K562 (cell line): ENCODE measurements at regions of chr19 and their contacts with region 1.

Region 1: GRCh38 chr19:3852614-3853254 is 16.1 kb downstream of the ZFR2 start:
- DNase-seq: peak in 3 of 4 experiments; percentile 39 to 79 (median 63)
- ATAC-seq: peak; percentile 81
- H3K4me3 ChIP-seq: no peak overlapping the region
- H3K27ac ChIP-seq: no peak overlapping the region
- H3K4me1 ChIP-seq: peaks cover 18 to 42% of the 10 kb centered on the region in 2 experiments; a peak in 4 of 5 replicates
- H3K27me3 ChIP-seq: peaks cover 0 to 12% of the 10 kb centered on the region in 2 experiments; a peak in 1 of 5 replicates
- CTCF ChIP-seq: peak; percentile 81 to 82 (median 82)
- EP300 ChIP-seq: no peak
- POLR2A ChIP-seq: no peak
- RAD21 ChIP-seq: peak; percentile 76 to 89

Region 2: DNA sequence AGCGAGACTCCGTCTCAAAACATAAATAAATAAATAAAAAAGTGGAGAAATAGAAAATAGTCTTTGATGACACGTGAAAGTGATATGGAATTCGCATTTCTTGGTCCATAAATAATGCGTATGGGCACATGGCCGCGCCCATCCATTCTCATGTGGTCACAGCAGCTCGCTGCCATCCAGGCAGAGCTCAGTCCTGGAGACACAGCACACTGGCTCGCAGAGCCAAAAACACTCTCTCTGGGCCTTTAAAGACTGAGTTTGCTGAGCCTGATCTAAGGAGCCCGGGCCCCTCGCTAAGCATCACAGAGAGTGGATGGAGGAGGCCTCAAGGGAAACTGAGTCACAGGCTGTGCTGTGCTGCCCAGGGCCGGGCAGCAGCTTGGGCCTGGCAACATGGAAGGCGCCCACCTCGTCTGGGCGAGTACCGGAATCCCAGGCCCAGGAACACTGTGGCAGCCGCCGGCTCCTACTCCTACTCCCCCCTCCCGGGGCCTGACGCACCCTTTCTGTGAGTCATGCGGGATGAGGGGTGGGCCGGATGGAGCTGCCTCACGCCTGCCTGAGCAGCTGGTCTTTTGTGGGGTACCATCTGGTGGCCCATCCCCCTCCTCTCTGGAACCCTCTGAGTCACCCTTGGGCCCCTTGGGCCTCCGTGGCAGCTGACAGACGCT is 197.2 kb before region 1 on chr19:
- CTCF ChIA-PET with region 1: no interaction called
- POLR2A ChIA-PET with region 1: no interaction called
- in situ Hi-C with region 1: loop called (anchors 5 kb)
- intact Hi-C with region 1: no loop called
- DNase-seq: peak in 2 of 4 experiments; percentile 31 to 34
- ATAC-seq: no peak
- H3K4me3 ChIP-seq: no peak overlapping the region
- H3K27ac ChIP-seq: no peak overlapping the region
- H3K4me1 ChIP-seq: peaks cover 0 to 53% of the 10 kb centered on the region in 2 experiments; a peak in 2 of 5 replicates
- H3K27me3 ChIP-seq: no peaks in the 10 kb centered on the region
- CTCF ChIP-seq: no peak
- EP300 ChIP-seq: no peak
- POLR2A ChIP-seq: no peak
- RAD21 ChIP-seq: no peak

Region 3: DNA sequence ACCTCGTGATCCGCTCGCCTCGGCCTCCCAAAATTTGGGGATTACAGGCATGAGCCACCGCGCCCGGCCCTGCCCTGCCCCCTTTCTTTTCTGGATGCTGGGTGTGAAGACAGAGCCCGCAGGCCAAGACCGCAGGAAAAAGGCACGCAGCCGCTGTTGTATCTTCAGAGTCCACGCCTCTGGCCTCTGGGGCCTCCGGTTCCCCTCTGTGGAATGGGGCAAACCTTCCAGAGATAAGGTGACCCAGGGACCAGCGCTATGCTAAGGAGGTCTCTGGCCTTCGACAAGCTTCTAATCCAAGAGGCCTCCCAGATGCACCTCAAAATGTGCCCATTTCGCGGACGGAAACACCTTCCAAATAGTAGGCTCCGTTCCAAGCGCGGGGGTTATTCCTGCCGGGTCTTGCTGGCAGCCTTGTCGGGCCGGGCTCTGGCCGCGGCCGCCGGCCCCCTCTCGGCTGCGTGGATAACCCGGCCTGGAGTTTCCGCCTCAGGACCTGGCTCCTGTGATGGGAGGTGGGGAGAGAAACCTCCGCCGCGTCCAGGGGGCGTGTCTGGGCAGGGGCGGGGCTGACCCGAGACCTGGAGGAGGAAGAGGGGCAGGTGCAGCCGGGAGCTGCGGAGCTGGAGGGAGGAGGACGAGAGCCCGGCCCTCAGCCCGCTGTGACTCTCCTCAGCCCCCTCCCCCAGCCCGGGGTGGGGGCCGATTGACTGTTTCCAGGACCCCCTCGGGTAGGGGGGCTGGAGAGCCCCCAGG is 131.4 kb before region 1 on chr19:
- CTCF ChIA-PET with region 1: no interaction called
- POLR2A ChIA-PET with region 1: no interaction called
- in situ Hi-C with region 1: no loop called
- intact Hi-C with region 1: loop called (anchors 5 kb)
- DNase-seq: peak; percentile 96 to 98 (median 98)
- ATAC-seq: peak; percentile 85
- H3K4me3 ChIP-seq: 0 out of 2 replicates have a peak overlapping the region, but pooled peaks have one; percentile 10
- H3K27ac ChIP-seq: no peak overlapping the region
- H3K4me1 ChIP-seq: peaks cover 7 to 31% of the 10 kb centered on the region in 2 experiments; a peak in 3 of 5 replicates
- H3K27me3 ChIP-seq: no peaks in the 10 kb centered on the region
- CTCF ChIP-seq: peak in 1 of 3 experiments; percentile 11; a peak in 1 of 6 replicates
- EP300 ChIP-seq: peak; percentile 65
- POLR2A ChIP-seq: no peak
- RAD21 ChIP-seq: no peak

Region 4: GRCh38 chr19:3783660-3784584 is 68.8 kb before region 1 on chr19:
- CTCF ChIA-PET with region 1: no interaction called
- POLR2A ChIA-PET with region 1: no interaction called
- in situ Hi-C with region 1: no loop called
- intact Hi-C with region 1: loop called (anchors 10 kb)
- DNase-seq: peak; percentile 37 to 57 (median 49)
- ATAC-seq: peak; percentile 58
- H3K4me3 ChIP-seq: no peak overlapping the region
- H3K27ac ChIP-seq: no peak overlapping the region
- H3K4me1 ChIP-seq: peaks cover 0 to 45% of the 10 kb centered on the region in 2 experiments; a peak in 2 of 5 replicates
- H3K27me3 ChIP-seq: no peaks in the 10 kb centered on the region
- CTCF ChIP-seq: peak; percentile 39 to 45 (median 44); a peak in 5 of 6 replicates
- EP300 ChIP-seq: no peak
- POLR2A ChIP-seq: no peak
- RAD21 ChIP-seq: peak in 1 of 2 experiments; percentile 32; a peak in 2 of 4 replicates

Region 5: DNA sequence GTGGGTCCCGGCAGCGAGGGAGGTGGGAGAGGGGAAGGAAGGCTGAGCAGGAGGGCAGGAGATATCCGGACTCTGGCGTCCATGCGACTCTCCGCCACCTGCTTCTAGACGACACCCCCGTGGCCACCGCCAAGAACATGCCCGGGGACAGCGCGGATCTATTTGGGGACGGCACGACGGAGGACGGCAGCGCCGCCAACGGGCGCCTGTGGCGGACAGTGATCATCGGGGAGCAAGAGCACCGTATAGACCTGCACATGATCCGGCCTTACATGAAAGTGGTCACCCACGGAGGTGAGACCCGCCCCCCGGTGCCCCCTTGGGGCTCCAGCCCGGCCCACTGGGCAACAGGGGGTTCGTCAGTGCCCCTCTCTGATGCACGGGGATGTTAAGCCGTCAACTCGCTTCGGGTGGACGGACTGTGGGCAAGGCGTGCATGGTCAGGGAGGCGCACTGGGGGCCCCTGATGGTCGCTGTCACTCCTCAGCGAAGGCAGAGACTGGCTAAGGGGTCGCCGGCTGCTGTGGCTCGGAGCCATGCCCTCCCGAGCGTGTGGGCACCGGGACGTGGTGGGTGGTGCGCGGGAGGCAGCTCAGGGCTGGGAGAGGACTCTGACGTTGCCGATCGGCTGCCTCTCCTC is 55.0 kb after region 1 on chr19:
- CTCF ChIA-PET with region 1: no interaction called
- POLR2A ChIA-PET with region 1: no interaction called
- in situ Hi-C with region 1: no loop called
- intact Hi-C with region 1: no loop called
- DNase-seq: peak in 2 of 4 experiments; percentile 31 to 32
- ATAC-seq: peak; percentile 87
- H3K4me3 ChIP-seq: no peak overlapping the region
- H3K27ac ChIP-seq: no peak overlapping the region
- H3K4me1 ChIP-seq: peaks cover 0 to 14% of the 10 kb centered on the region in 2 experiments; a peak in 2 of 5 replicates
- H3K27me3 ChIP-seq: peaks cover 19 to 35% of the 10 kb centered on the region in 2 experiments; a peak in 4 of 5 replicates
- CTCF ChIP-seq: peak; percentile 19 to 32 (median 25); a peak in 3 of 6 replicates
- EP300 ChIP-seq: no peak
- POLR2A ChIP-seq: no peak
- RAD21 ChIP-seq: peak in 1 of 2 experiments; percentile 4; a peak in 1 of 4 replicates

Region 6: GRCh38 chr19:4208385-4209094 is 355.8 kb after region 1 on chr19:
- CTCF ChIA-PET with region 1: interaction called, 6 read pairs
- POLR2A ChIA-PET with region 1: no interaction called
- in situ Hi-C with region 1: no loop called
- intact Hi-C with region 1: loop called (anchors 1 kb)
- DNase-seq: peak in 3 of 4 experiments; percentile 55 to 59 (median 58)
- ATAC-seq: no peak
- H3K4me3 ChIP-seq: no peak overlapping the region
- H3K27ac ChIP-seq: no peak overlapping the region
- H3K4me1 ChIP-seq: peaks cover 5 to 28% of the 10 kb centered on the region in 2 experiments; a peak in 4 of 5 replicates
- H3K27me3 ChIP-seq: peaks cover 7 to 20% of the 10 kb centered on the region in 2 experiments; a peak in 3 of 5 replicates
- CTCF ChIP-seq: peak; percentile 20 to 35 (median 29); a peak in 2 of 6 replicates
- EP300 ChIP-seq: no peak
- POLR2A ChIP-seq: no peak
- RAD21 ChIP-seq: 0 out of 4 replicates have a peak, but pooled peaks of 1 of the 2 experiments have one; percentile 6